Activated CD4-positive, alpha-beta T cell treated with anti-CD3 and anti-CD28 coated beads for 36 hours (primary cell): ENCODE measurements at regions of chr6 and their contacts with region 1.

Region 1: GRCh38 chr6:37083243-37084138 is 78.0 kb downstream of the FGD2 start:
- DNase-seq: no peak
- ATAC-seq: no peak
- H3K4me3 Mint-ChIP-seq: no peak overlapping the region
- H3K27ac Mint-ChIP-seq: no peak overlapping the region
- H3K4me1 Mint-ChIP-seq: no peaks in the 10 kb centered on the region
- H3K27me3 Mint-ChIP-seq: peaks cover 2% of the 10 kb centered on the region

Region 2: DNA sequence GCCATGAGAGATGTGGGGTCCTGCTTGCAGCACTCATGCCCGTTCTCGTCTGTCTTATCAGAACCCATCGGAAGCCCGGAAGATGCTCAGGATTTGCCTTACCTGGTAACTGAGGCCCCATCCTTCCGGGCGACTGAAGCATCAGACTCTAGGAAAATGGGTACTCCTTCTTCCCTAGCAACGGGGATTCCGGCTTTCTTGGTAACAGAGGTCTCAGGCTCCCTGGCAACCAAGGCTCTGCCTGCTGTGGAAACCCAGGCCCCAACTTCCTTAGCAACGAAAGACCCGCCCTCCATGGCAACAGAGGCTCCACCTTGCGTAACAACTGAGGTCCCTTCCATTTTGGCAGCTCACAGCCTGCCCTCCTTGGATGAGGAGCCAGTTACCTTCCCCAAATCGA is 120.6 kb before region 1 on chr6:
- CTCF ChIA-PET with region 1: no interaction called
- POLR2A ChIA-PET with region 1: no interaction called
- intact Hi-C with region 1: no loop called
- DNase-seq: peak; percentile 88
- ATAC-seq: peak; percentile 84
- H3K4me3 Mint-ChIP-seq: peak overlapping the region; percentile 54
- H3K27ac Mint-ChIP-seq: peak overlapping the region; percentile 64
- H3K4me1 Mint-ChIP-seq: peaks cover 45% of the 10 kb centered on the region
- H3K27me3 Mint-ChIP-seq: no peaks in the 10 kb centered on the region

Region 3: DNA sequence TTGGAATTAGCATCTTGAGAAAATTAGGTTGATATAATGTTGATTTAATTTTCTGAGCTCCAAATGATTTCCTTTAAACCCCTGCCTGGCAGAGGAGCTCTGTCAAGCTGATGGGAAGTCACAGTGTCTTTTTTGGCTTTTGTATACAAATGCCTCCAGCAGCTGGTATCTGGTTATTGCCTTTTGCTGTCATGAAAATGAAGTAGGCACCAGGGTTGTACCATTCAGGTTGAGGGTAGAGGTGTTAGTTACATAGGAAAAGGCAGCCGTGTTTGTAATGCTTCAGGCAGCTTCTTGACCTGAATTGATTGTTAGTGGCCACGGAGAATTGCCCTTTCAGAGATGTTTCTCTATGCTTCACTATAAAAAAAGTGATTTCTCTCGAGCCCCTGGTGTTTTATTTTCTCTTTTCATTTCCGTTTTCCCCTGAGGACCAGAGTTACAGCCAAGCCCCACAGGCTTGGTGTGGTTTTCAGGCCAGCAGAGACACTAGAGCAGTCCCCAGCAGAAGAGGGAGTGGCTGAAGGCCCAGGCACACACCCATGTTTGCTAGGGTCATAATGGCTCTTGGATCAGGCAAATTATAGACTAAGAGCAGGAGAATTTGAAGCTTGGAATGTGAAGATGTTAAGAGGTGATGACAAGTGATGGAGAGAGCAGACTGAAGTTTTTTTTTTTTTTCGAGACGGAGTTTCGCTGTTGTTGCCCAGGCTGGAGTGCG is 371.1 kb after region 1 on chr6:
- CTCF ChIA-PET with region 1: interaction called, 4 read pairs
- POLR2A ChIA-PET with region 1: no interaction called
- intact Hi-C with region 1: loop called in 1 of 2 experiments (anchors 5 kb)
- DNase-seq: no peak
- ATAC-seq: no peak
- H3K4me3 Mint-ChIP-seq: no peak overlapping the region
- H3K27ac Mint-ChIP-seq: no peak overlapping the region
- H3K4me1 Mint-ChIP-seq: peaks cover 19% of the 10 kb centered on the region
- H3K27me3 Mint-ChIP-seq: no peaks in the 10 kb centered on the region

Region 4: DNA sequence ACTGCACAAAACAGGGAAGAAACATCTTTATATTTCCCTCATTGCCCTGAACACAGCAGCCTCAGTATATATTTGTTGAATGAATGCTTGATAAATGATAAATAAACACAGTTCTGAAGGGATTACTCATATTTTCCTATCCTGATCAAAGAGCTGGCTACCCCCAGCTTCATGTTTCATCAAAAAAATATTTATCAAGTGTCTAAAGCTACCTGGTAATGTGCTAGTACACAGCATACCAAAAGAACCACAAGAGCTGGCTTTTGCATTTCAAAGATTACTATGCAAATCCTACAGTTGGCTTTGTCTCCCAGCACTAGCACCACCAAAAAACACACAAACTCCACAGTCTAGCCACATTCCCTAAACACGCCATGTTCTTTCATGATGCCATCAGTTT is 1426.2 kb after region 1 on chr6:
- CTCF ChIA-PET with region 1: no interaction called
- POLR2A ChIA-PET with region 1: no interaction called
- intact Hi-C with region 1: no loop called
- DNase-seq: no peak
- ATAC-seq: no peak
- H3K4me3 Mint-ChIP-seq: no peak overlapping the region
- H3K27ac Mint-ChIP-seq: no peak overlapping the region
- H3K4me1 Mint-ChIP-seq: no peaks in the 10 kb centered on the region
- H3K27me3 Mint-ChIP-seq: no peaks in the 10 kb centered on the region